Naive thymus-derived CD4-positive, alpha-beta T cell (primary cell): ENCODE measurements at regions of chr12 and their contacts with region 1.

Region 1: GRCh38 chr12:79547735-79548609 is 142.8 kb downstream of the PAWR start:
- DNase-seq: peak in 2 of 9 donors; percentile 7 to 10
- ATAC-seq: no peak
- H3K4me3 ChIP-seq: no peak overlapping the region
- H3K4me3 Mint-ChIP-seq: no peak overlapping the region
- H3K27ac ChIP-seq: no peak overlapping the region
- H3K27ac Mint-ChIP-seq: no peak overlapping the region
- H3K4me1 ChIP-seq: no peaks in the 10 kb centered on the region
- H3K4me1 Mint-ChIP-seq: no peaks in the 10 kb centered on the region
- H3K27me3 ChIP-seq: no peaks in the 10 kb centered on the region
- H3K27me3 Mint-ChIP-seq: peaks cover 0 to 11% (median 0%) of the 10 kb centered on the region in 5 donors

Region 2: GRCh38 chr12:79737875-79738718 is 190.1 kb after region 1 on chr12:
- CTCF ChIA-PET with region 1: no interaction called
- POLR2A ChIA-PET with region 1: no interaction called
- intact Hi-C with region 1: loop called (anchors 1 to 2 kb)
- DNase-seq: peak in 6 of 9 donors; percentile 3 to 34 (median 10)
- ATAC-seq: no peak
- H3K4me3 ChIP-seq: no peak overlapping the region
- H3K4me3 Mint-ChIP-seq: no peak overlapping the region
- H3K27ac ChIP-seq: no peak overlapping the region
- H3K27ac Mint-ChIP-seq: no peak overlapping the region
- H3K4me1 ChIP-seq: no peaks in the 10 kb centered on the region
- H3K4me1 Mint-ChIP-seq: no peaks in the 10 kb centered on the region
- H3K27me3 ChIP-seq: no peaks in the 10 kb centered on the region
- H3K27me3 Mint-ChIP-seq: peaks cover 5 to 28% (median 18%) of the 10 kb centered on the region in 5 donors